GM10248 (cell line): ENCODE measurements at regions of chr9 and their contacts with region 1.

Region 1: DNA sequence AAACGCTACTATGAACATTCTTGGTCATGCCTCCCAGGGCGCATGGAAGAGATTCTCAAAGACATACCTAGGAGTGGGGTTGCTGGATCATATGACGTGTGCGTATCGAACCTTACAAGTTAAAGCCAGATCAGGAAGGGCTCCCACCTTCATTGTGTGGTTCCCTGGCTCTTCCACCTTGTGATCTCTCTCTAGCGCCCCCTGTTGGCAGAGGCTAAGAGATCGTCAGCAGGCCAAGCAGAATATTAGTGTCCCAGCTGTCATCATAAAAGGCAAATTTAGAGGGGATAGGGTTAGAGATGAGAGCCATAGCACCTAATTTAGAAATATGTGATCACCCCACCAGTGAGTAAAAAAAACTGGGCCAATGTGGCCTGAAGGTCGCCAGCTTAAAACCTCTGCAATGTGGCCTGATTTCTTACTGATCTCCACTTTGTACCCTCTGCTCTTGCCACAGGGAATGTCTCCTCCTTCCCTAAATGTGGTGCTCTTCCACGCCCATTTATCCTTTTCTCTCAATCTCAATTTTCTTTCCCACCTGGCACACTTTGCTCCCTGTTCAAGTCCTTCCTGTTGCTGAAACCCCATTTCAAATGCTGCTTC is 91.7 kb upstream of the SHB start:
- DNase-seq: peak; percentile 69
- CTCF ChIP-seq: peak; percentile 86

Region 2: GRCh38 chr9:38057416-38058195 is 103.1 kb before region 1 on chr9:
- CTCF ChIA-PET with region 1: no interaction called
- POLR2A ChIA-PET with region 1: no interaction called
- DNase-seq: no peak
- CTCF ChIP-seq: no peak

Region 3: GRCh38 chr9:38068866-38069629 is 91.7 kb before region 1 on chr9 and contains the start of gene SHB:
- CTCF ChIA-PET with region 1: no interaction called
- POLR2A ChIA-PET with region 1: no interaction called
- DNase-seq: peak; percentile 95
- CTCF ChIP-seq: no peak

Region 4: DNA sequence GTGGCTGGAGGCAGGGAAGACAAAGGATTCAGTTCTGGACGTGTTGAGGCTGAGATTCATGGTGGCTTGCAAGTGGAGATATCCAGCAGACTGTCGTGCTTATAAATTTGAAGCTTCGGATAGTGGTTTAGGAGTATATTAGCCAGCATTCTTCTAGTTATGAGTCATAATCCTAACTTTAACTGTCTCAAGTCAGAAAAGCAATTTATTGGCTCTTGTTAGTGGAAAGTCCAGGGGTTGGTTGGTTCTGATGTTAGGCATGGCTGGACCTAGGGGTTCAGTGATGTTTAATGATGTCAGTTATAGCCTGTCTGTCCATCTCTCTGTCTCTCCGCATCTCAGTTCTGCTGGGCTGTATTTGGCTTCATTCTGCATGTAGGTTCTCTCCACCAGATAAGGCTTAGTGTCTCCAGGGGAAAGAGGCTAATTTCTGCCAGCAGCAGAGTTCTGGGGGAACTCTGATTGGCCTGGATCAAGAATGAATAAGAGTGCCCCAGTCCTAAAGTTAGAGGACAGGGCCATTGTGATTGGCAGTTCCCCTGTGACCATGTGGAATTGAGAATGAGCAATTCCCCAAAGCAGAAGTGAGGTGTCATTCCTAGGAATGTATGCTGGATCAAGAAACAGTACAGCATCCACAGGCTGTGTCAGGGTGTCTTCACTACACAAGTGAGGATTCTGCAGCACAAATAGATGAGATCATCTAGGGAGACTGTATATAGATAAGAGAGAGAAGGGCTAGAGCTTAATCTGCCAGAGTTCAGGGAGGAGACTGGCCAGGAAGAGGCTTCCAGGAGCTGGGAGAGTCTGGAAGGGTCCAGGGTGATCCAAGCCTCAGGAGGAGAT is 18.7 kb before region 1 on chr9:
- CTCF ChIA-PET with region 1: interaction called, 13 read pairs
- POLR2A ChIA-PET with region 1: no interaction called
- DNase-seq: no peak
- CTCF ChIP-seq: no peak

Region 5: DNA sequence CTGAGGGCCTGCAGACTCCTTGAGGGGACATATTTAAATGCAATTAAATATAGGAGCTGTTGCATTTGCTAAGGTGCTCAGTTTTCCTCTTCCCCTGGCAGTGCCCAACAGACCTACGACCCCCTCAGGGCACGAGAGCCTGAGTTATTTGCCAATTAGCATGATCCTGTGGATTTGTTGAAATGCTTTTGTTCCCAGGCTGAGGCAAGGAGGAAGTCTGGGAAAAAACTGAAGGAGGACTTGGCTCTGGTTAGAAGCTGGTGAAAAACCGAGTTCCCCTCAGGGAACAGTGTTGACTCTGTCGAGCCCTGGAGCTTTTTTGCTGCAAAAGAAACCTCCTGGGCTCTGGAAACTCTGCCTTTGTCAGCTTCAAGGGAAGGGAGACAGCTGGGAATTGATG is 11.9 kb after region 1 on chr9:
- CTCF ChIA-PET with region 1: interaction called, 22 read pairs
- POLR2A ChIA-PET with region 1: no interaction called
- DNase-seq: no peak
- CTCF ChIP-seq: no peak

Region 6: DNA sequence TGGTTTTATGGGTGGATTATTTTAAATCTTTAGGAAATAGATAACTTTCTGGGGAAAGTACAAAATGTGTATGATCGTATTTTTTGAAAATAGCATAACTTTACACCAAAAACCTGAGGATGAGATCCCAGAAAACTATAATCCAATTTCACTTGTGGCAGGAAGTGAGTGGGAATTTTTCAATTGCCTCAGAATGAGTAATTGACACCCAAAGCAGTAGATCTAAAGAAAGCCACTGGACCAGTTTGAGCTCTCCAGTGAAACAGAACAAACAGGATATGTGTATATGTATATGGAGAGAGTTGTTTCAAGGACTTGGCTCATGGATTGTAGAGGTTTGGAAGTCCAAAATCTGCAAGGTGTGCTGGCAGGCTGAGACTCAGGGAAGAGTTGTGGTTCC is 17.5 kb after region 1 on chr9:
- CTCF ChIA-PET with region 1: interaction called, 22 read pairs
- POLR2A ChIA-PET with region 1: no interaction called
- DNase-seq: no peak
- CTCF ChIP-seq: no peak

Region 7: DNA sequence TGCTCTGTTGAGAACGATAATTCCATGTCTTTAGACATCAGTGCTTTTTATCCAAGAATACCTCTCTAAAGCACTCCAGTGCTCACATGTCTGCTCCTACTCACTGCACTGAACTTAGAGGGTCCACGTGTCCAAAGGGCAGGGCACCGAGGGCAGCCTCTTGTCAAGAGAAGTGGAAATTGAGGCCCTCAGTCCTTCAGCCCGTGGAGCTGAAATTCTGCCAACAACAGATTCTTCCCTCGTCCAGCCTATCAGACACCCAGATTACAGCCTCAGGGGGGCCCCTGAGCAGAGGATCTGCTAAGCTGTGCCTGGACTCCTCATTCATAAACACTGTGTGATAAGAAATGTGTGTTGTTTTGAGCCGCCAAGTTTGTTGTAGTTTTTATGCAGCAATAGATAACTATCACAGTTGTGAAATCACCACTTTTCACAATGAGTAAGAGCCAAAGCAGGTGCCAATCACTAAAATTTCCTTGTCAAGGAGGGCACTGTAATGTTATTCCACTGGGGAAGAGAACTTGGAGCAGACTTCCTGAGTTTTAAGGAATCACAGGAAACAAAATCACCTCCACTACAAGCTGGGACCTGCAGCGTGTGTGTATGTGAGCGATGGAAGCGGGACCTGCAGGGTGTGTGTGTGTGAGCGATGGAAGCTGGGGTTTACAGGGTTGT is 322.3 kb after region 1 on chr9:
- CTCF ChIA-PET with region 1: no interaction called
- POLR2A ChIA-PET with region 1: no interaction called
- DNase-seq: no peak
- CTCF ChIP-seq: no peak